Motor neuron (in vitro differentiated cells): ENCODE measurements at regions of chr12 and their contacts with region 1.

Region 1: GRCh38 chr12:118372541-118373495 is at the start of gene TAOK3:
- ATAC-seq: peak; percentile 73 to 89 (median 86)
- H3K4me3 ChIP-seq: peak within 1 kb of the TSS; percentile 68 to 91 (median 76)
- H3K27ac ChIP-seq: no peak within 1 kb of the TSS
- H3K4me1 ChIP-seq: peaks cover 9% of the 10 kb centered on the region in 2 donors
- total RNA-seq, gene TAOK3: 21.6 to 61.0 (median 40.2) TPM

Region 2: GRCh38 chr12:117212563-117213190 is 1160.1 kb before region 1 on chr12:
- in situ Hi-C with region 1: loop called in 1 of 9 experiments (anchors 25 kb)
- ATAC-seq: peak; percentile 76 to 93 (median 88)
- H3K4me3 ChIP-seq: no peak overlapping the region
- H3K27ac ChIP-seq: no peak overlapping the region
- H3K4me1 ChIP-seq: no peaks in the 10 kb centered on the region

Region 3: GRCh38 chr12:117874842-117875434 is 497.9 kb before region 1 on chr12:
- in situ Hi-C with region 1: loop called in 2 of 9 experiments (anchors 25 kb)
- ATAC-seq: peak; percentile 13 to 68 (median 24)
- H3K4me3 ChIP-seq: no peak overlapping the region
- H3K27ac ChIP-seq: no peak overlapping the region
- H3K4me1 ChIP-seq: no peaks in the 10 kb centered on the region

Region 4: GRCh38 chr12:118035246-118036041 is 337.4 kb before region 1 on chr12:
- in situ Hi-C with region 1: no loop called
- ATAC-seq: peak in 7 of 8 experiments; percentile 34 to 80 (median 67)
- H3K4me3 ChIP-seq: no peak overlapping the region
- H3K27ac ChIP-seq: no peak overlapping the region
- H3K4me1 ChIP-seq: peaks cover 0 to 8% of the 10 kb centered on the region in 2 donors

Region 5: GRCh38 chr12:118189741-118190191 is 183.1 kb before region 1 on chr12:
- in situ Hi-C with region 1: loop called in 7 of 9 experiments (anchors 10 to 25 kb)
- ATAC-seq: peak; percentile 64 to 79 (median 75)
- H3K4me3 ChIP-seq: peak overlapping the region; percentile 42 to 63 (median 48)
- H3K27ac ChIP-seq: peak overlapping the region; percentile 88 to 93
- H3K4me1 ChIP-seq: peaks cover 12 to 21% of the 10 kb centered on the region in 2 donors

Region 6: DNA sequence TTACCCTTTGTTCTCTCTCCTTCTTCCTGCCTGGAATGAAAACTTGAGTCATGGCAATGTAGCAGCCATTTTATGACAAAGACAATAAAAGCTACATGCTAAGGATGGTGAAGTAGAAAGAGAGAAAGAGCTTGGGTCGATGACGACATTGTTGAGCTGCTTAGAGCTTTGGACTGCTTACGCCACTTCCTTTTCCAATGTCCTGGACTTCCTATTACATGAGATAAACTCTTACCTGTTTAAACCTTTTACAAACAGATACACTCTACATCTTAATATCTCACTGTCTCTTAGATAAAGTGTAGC is 166.8 kb before region 1 on chr12:
- in situ Hi-C with region 1: loop called in 1 of 9 experiments (anchors 25 kb)
- ATAC-seq: no peak
- H3K4me3 ChIP-seq: no peak overlapping the region
- H3K27ac ChIP-seq: no peak overlapping the region
- H3K4me1 ChIP-seq: no peaks in the 10 kb centered on the region

Region 7: DNA sequence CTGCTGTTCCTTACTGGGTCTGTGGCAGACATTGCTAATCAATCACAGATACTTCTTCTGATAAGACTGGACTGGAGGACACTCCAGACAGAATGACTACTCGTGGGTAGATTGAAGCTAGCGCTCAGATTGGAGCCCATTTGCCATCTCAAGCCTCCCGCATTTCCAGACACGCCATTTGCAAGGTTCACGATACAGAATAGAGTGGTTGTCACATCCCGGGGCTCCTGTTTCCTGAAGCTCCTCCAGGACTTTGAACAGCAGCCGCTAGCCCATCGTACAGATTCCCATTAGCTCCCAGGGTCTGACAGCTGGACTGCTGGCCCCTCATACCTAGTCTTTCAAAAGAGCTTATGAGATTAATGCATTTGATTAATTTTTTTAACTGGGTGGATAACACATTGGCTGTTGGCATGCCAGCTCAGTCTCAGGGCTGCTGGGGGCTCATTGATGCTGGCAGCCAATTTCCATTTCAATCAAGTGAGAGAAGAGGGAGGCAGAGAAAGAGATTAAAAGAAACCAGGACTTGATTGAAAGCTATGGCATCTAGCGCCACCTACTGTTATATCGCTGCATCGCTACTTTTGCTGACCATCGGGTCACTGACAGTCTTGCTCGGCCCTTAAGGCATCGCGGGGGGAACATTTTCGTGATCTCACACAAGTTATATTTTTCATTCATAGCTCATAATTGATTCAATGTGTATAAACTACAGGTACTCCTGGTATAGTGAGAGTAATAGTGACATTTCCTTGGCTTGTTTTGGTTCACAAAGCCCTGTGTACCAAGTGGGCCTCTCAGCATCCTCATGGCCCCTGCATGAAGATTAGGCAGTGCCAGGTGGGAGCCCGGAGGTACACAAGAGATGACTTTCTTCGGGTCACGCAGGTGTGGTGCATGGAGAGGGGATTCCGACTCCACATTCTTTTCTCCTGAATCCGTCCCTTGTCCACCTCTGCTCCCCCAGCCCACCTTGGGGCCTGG is 1040.3 kb after region 1 on chr12:
- in situ Hi-C with region 1: loop called in 1 of 9 experiments (anchors 25 kb)
- ATAC-seq: peak; percentile 82 to 94 (median 91)
- H3K4me3 ChIP-seq: peak overlapping the region in 2 of 5 donors; percentile 0 to 11
- H3K27ac ChIP-seq: no peak overlapping the region
- H3K4me1 ChIP-seq: peaks cover 3 to 4% of the 10 kb centered on the region in 2 donors

Region 8: DNA sequence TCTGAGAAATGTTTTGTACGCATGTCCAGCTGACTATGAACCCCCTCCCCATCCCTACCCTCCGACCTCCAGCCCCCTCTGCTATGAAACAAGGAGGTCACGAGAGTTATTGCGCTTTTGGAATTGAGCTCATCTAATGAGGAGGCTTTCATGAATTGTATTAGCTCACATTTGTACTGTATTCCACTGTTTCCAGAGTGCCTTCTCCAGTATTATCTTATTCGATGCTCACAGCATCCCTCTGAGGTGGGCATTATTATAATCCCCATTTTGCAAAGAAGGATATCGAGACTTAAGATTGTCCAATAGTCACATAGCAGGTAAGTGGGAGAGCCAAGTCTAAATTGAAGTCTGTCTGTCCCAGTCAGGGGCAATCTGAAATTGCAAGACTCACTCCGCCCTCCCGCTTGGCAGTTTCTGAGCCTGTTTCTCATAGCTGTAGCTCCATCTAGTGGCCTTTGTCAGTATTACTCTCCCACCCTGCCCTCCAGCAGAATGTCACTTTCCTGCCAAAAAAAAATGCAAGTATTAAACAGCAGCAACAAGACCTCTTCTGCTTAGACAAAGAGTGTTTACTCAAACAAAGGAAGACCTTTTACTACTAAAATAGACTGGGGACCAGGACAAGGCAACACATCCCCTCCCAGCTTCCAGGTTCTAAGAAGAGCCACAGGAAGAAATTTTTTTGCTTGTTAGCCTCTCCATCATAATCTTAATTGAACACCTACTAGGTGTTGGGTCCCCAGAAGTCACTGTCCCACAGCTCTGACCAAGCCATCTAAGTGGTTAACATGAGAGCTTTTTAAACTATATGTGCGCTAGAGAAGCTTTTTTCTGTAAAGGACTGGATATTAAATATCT is 1172.2 kb after region 1 on chr12:
- in situ Hi-C with region 1: loop called in 1 of 9 experiments (anchors 25 kb)
- ATAC-seq: peak; percentile 63 to 87 (median 80)
- H3K4me3 ChIP-seq: no peak overlapping the region
- H3K27ac ChIP-seq: no peak overlapping the region
- H3K4me1 ChIP-seq: peaks cover 0 to 5% of the 10 kb centered on the region in 2 donors